ENCODE measurements at regions of chr1 and their contacts with region 1.

Region 1: GRCh38 chr1:165327538-165327937 is 29.0 kb downstream of the LMX1A start:
- DNase-seq: no peak
- H3K4me3 ChIP-seq: no peak overlapping the region
- H3K27ac ChIP-seq: no peak overlapping the region
- H3K4me1 ChIP-seq: no peaks in the 10 kb centered on the region
- H3K27me3 ChIP-seq: no peaks in the 10 kb centered on the region
- CTCF ChIP-seq: no peak
- EP300 ChIP-seq: no peak
- POLR2A ChIP-seq: no peak

Region 2: GRCh38 chr1:165949335-165950130 is 622.0 kb after region 1 on chr1:
- intact Hi-C with region 1: loop called in 1 of 4 experiments (anchors 5 kb)
- DNase-seq: no peak
- H3K4me3 ChIP-seq: no peak overlapping the region
- H3K27ac ChIP-seq: no peak overlapping the region
- H3K4me1 ChIP-seq: no peaks in the 10 kb centered on the region
- H3K27me3 ChIP-seq: no peaks in the 10 kb centered on the region
- CTCF ChIP-seq: no peak
- EP300 ChIP-seq: no peak
- POLR2A ChIP-seq: no peak

Measured in ovary (tissue), 10 donors.